Activated CD4-positive, alpha-beta memory T cell treated with anti-CD3 and anti-CD28 coated beads, Interleukin-2, amount 10 ng/mL, durations not matched to agents 7 days and 5 days (primary cell): ENCODE measurements at regions of chr6 and their contacts with region 1.

Region 1: DNA sequence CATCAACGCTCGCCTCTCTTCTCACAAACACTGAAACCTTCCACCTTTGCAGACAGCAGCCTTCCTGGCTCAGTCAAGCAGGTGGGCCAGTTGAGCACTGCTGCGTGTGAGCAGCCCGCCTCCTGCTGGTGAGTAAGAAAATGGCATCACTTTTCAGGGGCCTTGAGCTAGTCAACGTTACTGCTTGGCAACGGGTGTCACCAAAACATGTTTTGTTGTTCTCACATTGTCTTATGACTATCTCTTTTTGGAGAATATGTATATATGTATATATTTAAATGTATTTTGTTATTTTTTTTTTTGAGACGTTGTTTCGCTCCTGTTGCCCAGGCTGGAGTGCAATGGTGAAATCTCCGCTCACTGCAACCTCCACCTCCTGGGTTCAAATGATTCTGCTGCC is 97.0 kb upstream of the AGPAT4 start:
- DNase-seq: peak; percentile 73
- H3K4me3 Mint-ChIP-seq: no peak overlapping the region
- H3K27ac Mint-ChIP-seq: no peak overlapping the region
- H3K4me1 Mint-ChIP-seq: no peaks in the 10 kb centered on the region
- H3K27me3 Mint-ChIP-seq: no peaks in the 10 kb centered on the region

Region 2: GRCh38 chr6:160733050-160733646 is 637.7 kb before region 1 on chr6:
- CTCF ChIA-PET with region 1: interaction called, 11 read pairs
- POLR2A ChIA-PET with region 1: no interaction called
- DNase-seq: peak; percentile 36
- H3K4me3 Mint-ChIP-seq: no peak overlapping the region
- H3K27ac Mint-ChIP-seq: no peak overlapping the region
- H3K4me1 Mint-ChIP-seq: peaks cover 3% of the 10 kb centered on the region
- H3K27me3 Mint-ChIP-seq: peaks cover 3% of the 10 kb centered on the region

Region 3: GRCh38 chr6:160972111-160972510 is 398.8 kb before region 1 on chr6:
- CTCF ChIA-PET with region 1: interaction called, 12 read pairs
- POLR2A ChIA-PET with region 1: no interaction called
- DNase-seq: no peak
- H3K4me3 Mint-ChIP-seq: no peak overlapping the region
- H3K27ac Mint-ChIP-seq: no peak overlapping the region
- H3K4me1 Mint-ChIP-seq: no peaks in the 10 kb centered on the region
- H3K27me3 Mint-ChIP-seq: peaks cover 2% of the 10 kb centered on the region

Region 4: DNA sequence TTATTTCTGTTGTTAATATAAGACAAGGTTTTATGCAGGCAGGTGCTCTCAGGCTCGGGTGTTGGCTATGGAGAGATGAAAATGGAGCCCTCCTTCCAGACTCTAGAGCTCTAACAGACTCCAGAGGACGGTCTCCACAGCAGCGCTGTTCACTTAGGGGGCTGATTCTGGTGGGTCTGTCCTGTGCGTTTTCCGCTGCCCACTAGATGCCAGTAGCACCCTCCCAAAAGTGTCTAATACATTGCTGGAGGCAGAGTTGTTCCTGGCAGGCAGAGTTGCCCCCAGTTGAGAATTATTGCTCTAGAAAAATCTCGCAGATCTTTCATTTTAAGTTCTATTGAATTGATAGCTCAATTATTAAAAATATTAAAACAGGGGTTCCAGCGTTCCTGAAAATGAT is 269.4 kb before region 1 on chr6:
- CTCF ChIA-PET with region 1: interaction called, 18 read pairs
- POLR2A ChIA-PET with region 1: no interaction called
- DNase-seq: no peak
- H3K4me3 Mint-ChIP-seq: no peak overlapping the region
- H3K27ac Mint-ChIP-seq: no peak overlapping the region
- H3K4me1 Mint-ChIP-seq: peaks cover 3% of the 10 kb centered on the region
- H3K27me3 Mint-ChIP-seq: no peaks in the 10 kb centered on the region

Region 5: GRCh38 chr6:161152907-161153662 is 217.8 kb before region 1 on chr6:
- CTCF ChIA-PET with region 1: interaction called, 59 read pairs
- POLR2A ChIA-PET with region 1: no interaction called
- DNase-seq: peak; percentile 27
- H3K4me3 Mint-ChIP-seq: no peak overlapping the region
- H3K27ac Mint-ChIP-seq: no peak overlapping the region
- H3K4me1 Mint-ChIP-seq: no peaks in the 10 kb centered on the region
- H3K27me3 Mint-ChIP-seq: no peaks in the 10 kb centered on the region

Region 6: DNA sequence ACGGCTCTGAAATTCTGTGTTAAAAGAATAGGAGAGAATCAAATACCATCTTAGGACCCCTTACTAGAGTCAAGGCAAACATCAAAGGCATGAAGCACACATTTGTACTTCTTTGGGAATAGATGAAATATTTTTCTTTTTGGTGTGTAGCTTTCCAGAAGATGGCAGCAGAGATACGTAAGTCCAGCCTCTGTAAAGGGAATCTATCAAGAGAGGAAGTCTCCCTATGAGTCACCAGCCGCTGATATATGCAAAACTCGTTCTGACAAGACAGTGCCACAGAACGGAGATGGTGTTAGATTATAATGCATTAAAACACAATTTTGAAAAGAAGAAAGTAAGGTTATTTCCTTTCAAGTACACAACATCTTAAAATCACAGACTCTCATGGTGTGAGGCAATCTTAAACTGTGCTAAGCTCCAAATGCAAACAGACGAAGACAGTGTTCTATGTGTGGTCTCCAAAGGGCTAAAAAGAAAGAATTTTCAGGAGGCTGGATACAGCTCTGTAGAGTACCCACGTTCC is 23.0 kb after region 1 on chr6:
- CTCF ChIA-PET with region 1: interaction called, 13 read pairs
- POLR2A ChIA-PET with region 1: no interaction called
- DNase-seq: peak; percentile 69
- H3K4me3 Mint-ChIP-seq: no peak overlapping the region
- H3K27ac Mint-ChIP-seq: no peak overlapping the region
- H3K4me1 Mint-ChIP-seq: no peaks in the 10 kb centered on the region
- H3K27me3 Mint-ChIP-seq: peaks cover 34% of the 10 kb centered on the region